ENCODE measurements at regions of chr19 and their contacts with region 1.

Region 1: GRCh38 chr19:39328046-39328705 is 7.5 kb upstream of the LRFN1 start:
- DNase-seq: peak; percentile 45 to 92
- H3K4me3 ChIP-seq: no peak overlapping the region
- H3K4me1 ChIP-seq: no peaks in the 10 kb centered on the region
- H3K27me3 ChIP-seq: no peaks in the 10 kb centered on the region

Region 2: GRCh38 chr19:38975214-38975860 is 352.8 kb before region 1 on chr19 and contains the start of gene FBXO17:
- in situ Hi-C with region 1: loop called (anchors 10 kb)
- DNase-seq: peak; percentile 14 to 62
- H3K4me3 ChIP-seq: peak within 1 kb of the TSS; percentile 40
- H3K4me1 ChIP-seq: peaks cover 2% of the 10 kb centered on the region; the same call in 1 of the 2 replicates
- H3K27me3 ChIP-seq: no peaks in the 10 kb centered on the region

Region 3: DNA sequence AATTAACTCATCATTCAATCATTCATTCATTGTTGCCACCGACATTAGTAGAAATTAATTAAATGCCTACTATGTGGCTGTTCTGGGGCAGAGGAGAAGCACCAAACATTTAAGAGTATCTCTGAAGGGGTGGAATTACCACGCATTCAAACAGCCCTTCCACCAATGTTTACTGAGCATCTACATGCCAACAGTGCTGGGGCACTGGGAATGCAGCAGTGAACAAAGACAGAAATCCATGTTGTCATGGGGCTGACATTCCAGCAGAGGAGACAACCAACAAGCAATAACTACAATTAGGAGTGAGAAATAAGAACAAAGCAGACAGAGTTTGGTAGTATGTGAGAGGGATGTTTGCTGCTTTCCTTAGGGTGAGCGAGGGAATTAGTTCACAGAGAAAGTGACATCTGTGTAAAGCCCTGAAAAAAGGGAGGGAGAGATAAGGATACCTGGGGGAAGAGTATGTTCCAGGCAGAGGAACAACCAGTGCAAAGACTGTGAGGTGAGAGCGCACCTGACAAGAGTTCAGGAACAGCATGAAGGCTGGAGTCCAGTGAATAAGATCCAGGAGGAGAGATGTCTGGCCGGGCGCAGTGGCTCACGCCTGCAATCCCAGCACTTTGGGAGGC is 203.9 kb before region 1 on chr19:
- in situ Hi-C with region 1: loop called (anchors 5 kb)
- DNase-seq: no peak
- H3K4me3 ChIP-seq: no peak overlapping the region
- H3K4me1 ChIP-seq: peaks cover 10% of the 10 kb centered on the region
- H3K27me3 ChIP-seq: no peaks in the 10 kb centered on the region

Measured in HAP-1 (cell line).